Activated CD8-positive, alpha-beta T cell treated with anti-CD3 and anti-CD28 coated beads for 36 hours (primary cell): ENCODE measurements at regions of chr19 and their contacts with region 1.

Region 1: DNA sequence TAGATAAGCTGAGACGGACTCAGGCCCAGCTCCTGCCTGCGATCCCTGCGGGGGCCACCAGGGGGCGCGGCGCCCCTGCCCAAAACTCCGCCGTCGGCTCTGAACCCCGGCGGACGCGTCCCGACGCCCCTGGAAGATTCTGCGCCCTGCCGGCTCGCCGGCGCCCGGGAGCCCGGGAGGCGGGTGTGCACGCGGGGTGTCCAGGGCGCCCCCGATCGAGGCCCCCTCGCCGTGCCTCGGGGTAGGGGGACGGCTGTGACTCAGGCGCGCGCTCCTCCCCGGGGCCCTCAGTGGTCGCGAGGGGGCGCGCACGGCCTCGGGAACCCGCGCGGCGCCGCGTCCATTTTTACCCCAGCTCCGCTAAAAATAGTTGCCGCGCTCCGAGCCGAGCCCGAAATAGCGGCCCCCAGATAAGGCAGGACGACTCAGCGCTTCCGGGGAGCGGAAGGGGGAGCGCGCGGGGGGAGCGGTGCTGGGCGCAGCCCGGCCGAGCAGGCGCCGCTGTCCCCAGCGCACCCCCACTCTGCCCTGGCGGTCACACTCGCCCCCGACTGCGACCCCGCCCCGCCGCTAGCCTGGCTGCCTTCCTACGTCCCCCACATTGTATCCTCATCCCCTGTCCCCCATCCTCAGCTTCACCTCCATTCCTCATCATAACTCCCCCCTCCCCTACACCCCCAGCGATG is 16.0 kb upstream of the ERCC1 start:
- DNase-seq: peak; percentile 90
- ATAC-seq: peak; percentile 81
- H3K4me3 Mint-ChIP-seq: peak overlapping the region; percentile 46
- H3K27ac Mint-ChIP-seq: peak overlapping the region; percentile 13
- H3K4me1 Mint-ChIP-seq: peaks cover 32% of the 10 kb centered on the region
- H3K27me3 Mint-ChIP-seq: no peaks in the 10 kb centered on the region
- CTCF ChIP-seq: peak; percentile 100

Region 2: GRCh38 chr19:45391340-45391739 is 48.4 kb before region 1 on chr19:
- CTCF ChIA-PET with region 1: no interaction called
- POLR2A ChIA-PET with region 1: no interaction called
- intact Hi-C with region 1: no loop called
- DNase-seq: no peak
- ATAC-seq: no peak
- H3K4me3 Mint-ChIP-seq: no peak overlapping the region
- H3K27ac Mint-ChIP-seq: no peak overlapping the region
- H3K4me1 Mint-ChIP-seq: no peaks in the 10 kb centered on the region
- H3K27me3 Mint-ChIP-seq: peaks cover 12% of the 10 kb centered on the region
- CTCF ChIP-seq: no peak

Region 3: DNA sequence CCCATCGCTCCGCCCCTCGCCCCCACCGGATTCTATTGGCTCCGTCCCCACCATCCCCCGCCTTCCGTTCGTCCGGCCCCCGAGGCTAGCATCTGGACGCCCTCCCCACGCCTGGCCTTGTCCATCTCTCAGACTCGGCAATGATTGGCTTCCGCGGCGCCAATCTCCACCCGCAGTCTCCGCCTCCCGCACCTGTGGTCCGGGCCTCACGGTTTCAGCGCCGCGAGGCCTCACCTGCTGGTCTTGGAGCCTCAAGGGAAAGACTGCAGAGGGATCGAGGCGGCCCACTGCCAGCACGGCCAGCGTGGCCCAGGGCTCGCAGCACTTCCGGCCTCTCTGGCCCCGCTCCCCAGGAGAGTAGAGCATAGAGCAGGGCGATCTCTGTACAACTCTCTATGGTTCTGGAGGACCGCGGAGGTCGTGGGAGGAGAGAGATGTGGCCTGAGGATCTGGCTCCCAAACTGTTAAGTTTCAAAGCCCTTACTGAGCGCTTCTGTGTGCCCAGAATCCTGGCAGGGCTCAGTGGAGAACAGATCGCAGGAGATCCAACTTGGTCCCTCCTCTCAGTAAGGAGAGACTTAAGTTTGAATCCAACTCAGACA is 16.0 kb before region 1 on chr19 and contains the start of gene ERCC1:
- CTCF ChIA-PET with region 1: interaction called, 57 read pairs
- POLR2A ChIA-PET with region 1: interaction called, 4 read pairs
- intact Hi-C with region 1: no loop called
- DNase-seq: peak; percentile 89
- ATAC-seq: peak; percentile 74
- H3K4me3 Mint-ChIP-seq: peak within 1 kb of the TSS; percentile 89
- H3K27ac Mint-ChIP-seq: peak within 1 kb of the TSS; percentile 89
- H3K4me1 Mint-ChIP-seq: peaks cover 58% of the 10 kb centered on the region
- H3K27me3 Mint-ChIP-seq: no peaks in the 10 kb centered on the region
- CTCF ChIP-seq: no peak
- total RNA-seq, gene ERCC1: 41.6 to 46.5 TPM

Region 4: GRCh38 chr19:45455707-45456499 is 16.2 kb after region 1 on chr19:
- CTCF ChIA-PET with region 1: interaction called, 17 read pairs
- POLR2A ChIA-PET with region 1: interaction called, 3 read pairs
- intact Hi-C with region 1: no loop called
- DNase-seq: peak; percentile 86
- ATAC-seq: peak; percentile 84
- H3K4me3 Mint-ChIP-seq: peak overlapping the region; percentile 37
- H3K27ac Mint-ChIP-seq: peak overlapping the region; percentile 78
- H3K4me1 Mint-ChIP-seq: peaks cover 28% of the 10 kb centered on the region
- H3K27me3 Mint-ChIP-seq: no peaks in the 10 kb centered on the region
- CTCF ChIP-seq: no peak

Region 5: DNA sequence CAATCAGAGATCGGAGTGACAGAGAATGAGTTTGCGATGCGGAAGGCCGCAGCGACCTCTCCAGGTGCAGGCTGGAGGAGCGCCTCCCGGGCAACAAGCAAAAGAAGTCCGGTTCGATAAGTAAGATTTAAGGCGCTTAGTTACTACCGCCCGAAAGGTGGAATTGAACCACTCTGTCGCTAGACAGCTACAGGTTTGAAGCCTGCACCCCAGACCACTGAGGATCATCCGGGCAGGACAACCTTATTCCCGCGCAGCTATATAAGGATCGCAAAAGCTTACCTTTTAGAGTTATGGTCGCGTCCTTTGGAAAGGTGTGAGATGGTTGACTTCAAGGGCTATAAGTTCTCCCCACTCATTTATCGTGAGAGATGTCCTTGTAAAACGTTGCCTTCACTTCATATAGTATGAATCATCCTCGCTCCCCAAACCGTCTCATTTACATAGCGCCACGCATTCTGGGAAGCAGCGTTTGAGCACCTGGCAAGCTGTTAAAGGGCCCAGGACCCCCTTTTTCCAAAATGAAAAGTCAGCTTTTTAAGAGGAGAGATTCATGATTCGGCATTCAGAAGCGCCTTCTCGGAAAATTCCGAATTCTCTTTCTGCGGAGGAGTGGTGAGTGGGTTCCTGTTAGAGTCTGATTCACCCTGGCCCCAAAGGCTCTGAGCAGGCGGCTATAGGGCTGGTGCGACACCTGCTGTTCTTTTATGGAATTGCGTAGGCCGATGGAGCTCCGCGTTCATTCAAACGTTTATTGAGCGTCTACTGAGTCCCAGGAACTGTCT is 38.9 kb after region 1 on chr19:
- CTCF ChIA-PET with region 1: interaction called, 270 read pairs
- POLR2A ChIA-PET with region 1: interaction called, 28 read pairs
- intact Hi-C with region 1: loop called (anchors 1 kb)
- DNase-seq: peak; percentile 96
- ATAC-seq: peak; percentile 86
- H3K4me3 Mint-ChIP-seq: peak overlapping the region; percentile 58
- H3K27ac Mint-ChIP-seq: peak overlapping the region; percentile 95
- H3K4me1 Mint-ChIP-seq: peaks cover 18% of the 10 kb centered on the region
- H3K27me3 Mint-ChIP-seq: peaks cover 1% of the 10 kb centered on the region
- CTCF ChIP-seq: peak; percentile 71

Region 6: GRCh38 chr19:45496349-45496953 is 56.7 kb after region 1 on chr19:
- CTCF ChIA-PET with region 1: interaction called, 20 read pairs
- POLR2A ChIA-PET with region 1: no interaction called
- intact Hi-C with region 1: no loop called
- DNase-seq: peak; percentile 59
- ATAC-seq: peak; percentile 6
- H3K4me3 Mint-ChIP-seq: peak overlapping the region; percentile 28
- H3K27ac Mint-ChIP-seq: no peak overlapping the region
- H3K4me1 Mint-ChIP-seq: peaks cover 35% of the 10 kb centered on the region
- H3K27me3 Mint-ChIP-seq: peaks cover 19% of the 10 kb centered on the region
- CTCF ChIP-seq: no peak

Region 7: GRCh38 chr19:45643024-45643926 is 203.6 kb after region 1 on chr19:
- CTCF ChIA-PET with region 1: interaction called, 14 read pairs
- POLR2A ChIA-PET with region 1: interaction called, 8 read pairs
- intact Hi-C with region 1: no loop called
- DNase-seq: peak; percentile 97
- ATAC-seq: peak; percentile 41
- H3K4me3 Mint-ChIP-seq: peak overlapping the region; percentile 92
- H3K27ac Mint-ChIP-seq: peak overlapping the region; percentile 99
- H3K4me1 Mint-ChIP-seq: peaks cover 49% of the 10 kb centered on the region
- H3K27me3 Mint-ChIP-seq: peaks cover 3% of the 10 kb centered on the region
- CTCF ChIP-seq: peak; percentile 99